Endothelial cell of umbilical vein (primary cell): ENCODE measurements at regions of chr18 and their contacts with region 1.

Region 1: DNA sequence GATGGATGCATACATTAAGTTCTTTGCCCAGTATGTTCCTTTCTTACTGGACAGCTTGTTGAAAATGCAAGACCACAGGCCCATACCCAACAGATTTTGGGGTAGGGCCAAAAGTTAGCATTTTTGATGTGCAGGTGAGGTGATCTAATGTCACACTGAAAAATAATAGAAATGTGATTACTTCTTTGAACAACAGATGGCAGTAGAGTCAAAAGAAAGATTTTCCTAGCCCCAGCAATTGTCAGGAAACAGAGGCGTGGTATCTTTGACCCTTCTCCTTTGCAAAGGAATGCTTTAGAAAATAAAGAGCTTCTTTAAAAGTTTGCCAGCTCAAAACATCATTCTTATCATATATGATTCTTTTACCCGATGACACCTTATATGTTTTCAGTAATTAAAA is 343.6 kb upstream of the SYT4 start:
- DNase-seq: peak; percentile 41
- H3K4me3 ChIP-seq: no peak overlapping the region
- H3K27ac ChIP-seq: no peak overlapping the region
- H3K4me1 ChIP-seq: no peaks in the 10 kb centered on the region
- H3K27me3 ChIP-seq: no peaks in the 10 kb centered on the region
- CTCF ChIP-seq: peak in 1 of 2 donors; percentile 17
- POLR2A ChIP-seq: no peak

Region 2: DNA sequence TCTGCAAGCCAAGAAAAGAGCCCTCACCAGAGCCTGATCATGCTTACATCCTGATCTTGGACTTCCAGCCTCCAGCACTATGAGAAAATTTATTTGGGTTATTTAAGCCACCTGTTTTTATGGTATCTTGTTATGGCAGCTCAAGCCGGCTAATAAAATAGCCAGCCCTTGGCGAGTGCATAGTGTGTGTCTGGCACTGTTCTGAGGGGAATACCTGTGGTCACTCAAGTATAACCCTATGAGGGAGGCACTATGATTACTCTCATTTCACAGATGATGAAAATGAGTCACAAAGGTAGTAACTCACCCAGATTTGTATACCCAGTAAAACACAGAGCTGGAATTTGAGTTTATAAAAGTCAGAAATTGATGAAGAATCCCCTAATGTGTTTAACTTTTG is 502.8 kb after region 1 on chr18:
- CTCF ChIA-PET with region 1: no interaction called
- POLR2A ChIA-PET with region 1: no interaction called
- dilution Hi-C with region 1: no loop called
- intact Hi-C with region 1: loop called (anchors 10 kb)
- DNase-seq: no peak
- H3K4me3 ChIP-seq: no peak overlapping the region
- H3K27ac ChIP-seq: no peak overlapping the region
- H3K4me1 ChIP-seq: peaks cover 8% of the 10 kb centered on the region
- H3K27me3 ChIP-seq: no peaks in the 10 kb centered on the region
- CTCF ChIP-seq: no peak
- POLR2A ChIP-seq: no peak

Region 3: GRCh38 chr18:44325903-44326635 is 705.1 kb after region 1 on chr18:
- CTCF ChIA-PET with region 1: interaction called, 10 read pairs
- POLR2A ChIA-PET with region 1: no interaction called
- dilution Hi-C with region 1: no loop called
- intact Hi-C with region 1: loop called (anchors 2 kb)
- DNase-seq: peak; percentile 72
- H3K4me3 ChIP-seq: no peak overlapping the region
- H3K27ac ChIP-seq: no peak overlapping the region
- H3K4me1 ChIP-seq: no peaks in the 10 kb centered on the region
- H3K27me3 ChIP-seq: no peaks in the 10 kb centered on the region
- CTCF ChIP-seq: peak; percentile 54 to 64
- POLR2A ChIP-seq: no peak

Region 4: DNA sequence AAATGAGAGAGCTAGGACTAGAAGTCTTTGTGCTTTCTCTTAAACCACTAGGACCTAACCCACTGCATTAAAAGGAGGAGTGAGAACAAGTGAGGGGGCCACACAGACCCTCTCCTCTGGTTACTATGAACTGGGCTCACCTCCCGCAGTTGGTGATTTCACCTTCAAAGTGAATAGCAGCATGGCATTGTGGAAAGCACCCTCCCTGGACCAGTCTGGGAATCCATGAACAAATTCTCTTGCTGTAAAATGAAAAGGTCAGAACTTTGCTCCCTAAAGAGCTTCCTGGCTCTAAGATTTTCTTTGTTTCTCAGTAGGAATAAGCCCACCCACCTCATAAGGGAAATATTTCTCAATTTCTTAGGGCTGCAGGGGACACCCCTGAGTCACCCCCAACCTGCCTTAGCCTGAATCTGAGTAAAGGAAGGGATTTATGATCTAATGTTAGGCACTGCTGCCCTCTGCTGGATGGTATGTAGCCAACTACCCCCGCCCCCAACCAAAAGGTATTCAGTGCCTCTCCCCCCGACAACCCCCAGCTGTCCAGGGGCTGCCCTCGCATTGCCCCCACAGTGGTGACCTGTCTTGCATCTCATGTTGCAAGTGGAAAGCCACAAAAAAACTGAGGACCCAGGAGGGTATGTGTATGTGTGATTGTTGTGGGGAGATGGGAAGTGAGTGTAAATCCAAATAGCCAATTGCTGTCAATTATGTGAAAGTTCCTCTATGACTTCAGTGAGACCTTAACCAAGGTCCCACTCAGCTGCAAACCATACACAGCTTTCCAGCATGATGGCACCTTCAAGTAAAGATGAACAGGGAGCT is 1763.4 kb after region 1 on chr18:
- CTCF ChIA-PET with region 1: interaction called, 11 read pairs
- POLR2A ChIA-PET with region 1: no interaction called
- dilution Hi-C with region 1: no loop called
- intact Hi-C with region 1: no loop called
- DNase-seq: peak; percentile 45
- H3K4me3 ChIP-seq: no peak overlapping the region
- H3K27ac ChIP-seq: no peak overlapping the region
- H3K4me1 ChIP-seq: no peaks in the 10 kb centered on the region
- H3K27me3 ChIP-seq: no peaks in the 10 kb centered on the region
- CTCF ChIP-seq: peak; percentile 42 to 60
- POLR2A ChIP-seq: no peak

Region 5: DNA sequence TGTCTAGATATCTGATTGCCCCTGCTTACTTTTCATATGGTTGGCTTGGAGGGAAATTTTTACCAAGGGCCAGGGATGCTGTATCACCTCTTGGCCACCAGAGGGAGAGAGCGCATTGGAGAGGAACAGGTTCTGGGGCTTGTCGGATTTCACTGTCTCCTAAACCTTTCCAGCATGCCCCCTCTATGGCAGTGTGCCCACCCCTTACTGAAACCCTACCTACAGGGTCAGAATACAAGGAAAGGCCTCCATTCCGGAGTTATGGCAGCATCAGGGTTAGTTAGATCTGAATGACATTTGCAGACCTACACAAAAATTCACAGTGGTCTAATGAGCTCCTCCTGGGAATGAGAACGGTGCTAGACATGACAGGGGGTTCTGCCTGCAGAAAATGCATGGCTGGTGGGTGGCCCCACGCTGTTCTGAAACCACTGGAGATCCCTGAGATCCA is 2000.2 kb after region 1 on chr18:
- CTCF ChIA-PET with region 1: no interaction called
- POLR2A ChIA-PET with region 1: no interaction called
- dilution Hi-C with region 1: no loop called
- intact Hi-C with region 1: loop called (anchors 5 kb)
- DNase-seq: peak; percentile 41
- H3K4me3 ChIP-seq: no peak overlapping the region
- H3K27ac ChIP-seq: no peak overlapping the region
- H3K4me1 ChIP-seq: no peaks in the 10 kb centered on the region
- H3K27me3 ChIP-seq: peaks cover 2% of the 10 kb centered on the region in 2 experiments
- CTCF ChIP-seq: peak; percentile 81 to 89
- POLR2A ChIP-seq: no peak